Heart left ventricle (tissue), 16 donors: ENCODE measurements at regions of chr1 and their contacts with region 1.

Region 1: GRCh38 chr1:229164836-229165735 is 105.8 kb upstream of the RAB4A start:
- DNase-seq: no peak
- ATAC-seq: peak in 1 of 4 donors; percentile 18
- H3K4me3 ChIP-seq: no peak overlapping the region
- H3K27ac ChIP-seq: no peak overlapping the region
- H3K4me1 ChIP-seq: peaks cover 0 to 19% (median 0%) of the 10 kb centered on the region in 12 donors
- H3K27me3 ChIP-seq: peaks cover 0 to 6% (median 0%) of the 10 kb centered on the region in 9 donors
- CTCF ChIP-seq: no peak
- POLR2A ChIP-seq: no peak

Region 2: DNA sequence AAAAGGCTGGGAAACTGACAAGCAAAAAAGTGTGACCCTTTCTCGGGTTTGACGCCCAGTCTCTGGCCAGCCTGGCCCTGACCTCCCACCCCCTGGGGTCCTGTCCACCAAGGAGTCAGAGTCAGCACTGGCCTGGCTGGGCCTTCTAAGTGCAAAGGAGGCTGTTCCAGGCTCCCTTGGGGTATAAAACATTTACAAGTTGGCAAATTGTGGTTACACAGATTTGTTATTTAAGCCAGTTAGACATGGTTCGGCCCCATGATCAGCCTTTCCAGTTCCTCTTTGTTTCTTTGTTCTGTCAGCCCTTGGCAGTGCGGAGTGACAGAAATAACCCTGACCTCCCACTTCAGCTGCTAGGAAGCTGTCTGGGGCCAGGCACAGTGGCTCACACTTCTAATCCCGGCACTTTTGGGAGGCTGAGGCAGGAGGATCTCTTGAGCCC is 55.7 kb before region 1 on chr1:
- intact Hi-C with region 1: loop called in 1 of 10 experiments (anchors 10 kb)
- DNase-seq: peak in 2 of 5 donors; percentile 27 to 39
- ATAC-seq: peak in 3 of 4 donors; percentile 76 to 84 (median 78)
- H3K4me3 ChIP-seq: no peak overlapping the region
- H3K27ac ChIP-seq: peak overlapping the region in 3 of 12 donors; percentile 28 to 73 (median 70)
- H3K4me1 ChIP-seq: peaks cover 0 to 19% (median 0%) of the 10 kb centered on the region in 12 donors
- H3K27me3 ChIP-seq: no peaks in the 10 kb centered on the region
- CTCF ChIP-seq: no peak
- POLR2A ChIP-seq: no peak

Region 3: DNA sequence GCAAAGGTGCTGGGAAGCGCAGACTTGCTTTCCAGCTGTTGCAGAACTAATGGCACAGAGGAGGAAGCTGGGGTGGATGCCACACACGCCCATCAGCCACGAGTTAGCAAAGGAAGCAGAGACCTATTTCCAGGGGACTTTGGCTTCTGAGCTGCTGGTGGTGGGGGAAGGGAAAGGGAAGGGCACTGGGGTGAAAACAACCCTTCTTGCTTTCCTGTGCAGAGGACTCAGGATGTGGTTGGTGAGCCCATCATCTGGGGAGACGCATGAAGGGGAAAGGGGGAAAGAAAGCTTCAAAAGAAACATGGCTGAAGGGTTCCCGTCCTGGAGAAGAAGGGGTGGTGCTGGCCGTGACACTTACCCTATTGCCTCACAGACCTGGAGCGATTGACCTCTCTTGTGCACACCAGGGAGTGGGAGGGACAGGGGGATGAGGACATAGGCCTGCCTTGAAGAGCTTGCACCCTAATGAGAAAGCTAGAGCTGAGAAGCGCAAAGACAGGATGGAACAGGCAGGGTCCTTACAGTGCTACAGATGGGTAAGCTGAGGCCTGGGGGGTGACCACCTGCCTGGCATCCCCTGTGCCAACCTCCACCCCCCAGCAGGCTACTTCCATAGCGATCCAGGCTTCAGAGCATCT is 34.9 kb before region 1 on chr1:
- intact Hi-C with region 1: no loop called
- DNase-seq: peak in 3 of 5 donors; percentile 36 to 56 (median 49)
- ATAC-seq: peak in 3 of 4 donors; percentile 41 to 76 (median 76)
- H3K4me3 ChIP-seq: no peak overlapping the region
- H3K27ac ChIP-seq: peak overlapping the region in 1 of 12 donors; percentile 37
- H3K4me1 ChIP-seq: peaks cover 0 to 41% (median 0%) of the 10 kb centered on the region in 12 donors
- H3K27me3 ChIP-seq: peaks cover 0 to 16% (median 0%) of the 10 kb centered on the region in 9 donors
- CTCF ChIP-seq: no peak
- POLR2A ChIP-seq: no peak

Region 4: GRCh38 chr1:229148041-229148671 is 16.9 kb before region 1 on chr1:
- intact Hi-C with region 1: no loop called
- DNase-seq: peak in 3 of 5 donors; percentile 31 to 63 (median 44)
- ATAC-seq: peak; percentile 65 to 85 (median 78)
- H3K4me3 ChIP-seq: no peak overlapping the region
- H3K27ac ChIP-seq: no peak overlapping the region
- H3K4me1 ChIP-seq: peaks cover 0 to 17% (median 6%) of the 10 kb centered on the region in 12 donors
- H3K27me3 ChIP-seq: peaks cover 0 to 43% (median 7%) of the 10 kb centered on the region in 9 donors
- CTCF ChIP-seq: no peak
- POLR2A ChIP-seq: no peak

Region 5: GRCh38 chr1:229378586-229379367 is 213.7 kb after region 1 on chr1:
- intact Hi-C with region 1: no loop called
- DNase-seq: no peak
- ATAC-seq: no peak
- H3K4me3 ChIP-seq: no peak overlapping the region
- H3K27ac ChIP-seq: no peak overlapping the region
- H3K4me1 ChIP-seq: peaks cover 0 to 6% (median 0%) of the 10 kb centered on the region in 12 donors
- H3K27me3 ChIP-seq: peaks cover 0 to 15% (median 0%) of the 10 kb centered on the region in 9 donors
- CTCF ChIP-seq: no peak
- POLR2A ChIP-seq: no peak